PC-9 (cell line): ENCODE measurements at regions of chr9 and their contacts with region 1.

Region 1: GRCh38 chr9:97411789-97412625 is at the start of gene TDRD7:
- DNase-seq: peak; percentile 56 to 88
- H3K4me3 ChIP-seq: peak within 1 kb of the TSS; percentile 89
- H3K27ac ChIP-seq: no peak within 1 kb of the TSS
- H3K4me1 ChIP-seq: peaks cover 8% of the 10 kb centered on the region
- H3K27me3 ChIP-seq: peaks cover 10% of the 10 kb centered on the region; the same call in 1 of the 2 replicates
- CTCF ChIP-seq: peak; percentile 80
- total RNA-seq, gene TDRD7: 11.9 and 14.2 TPM in 2 replicates

Region 2: DNA sequence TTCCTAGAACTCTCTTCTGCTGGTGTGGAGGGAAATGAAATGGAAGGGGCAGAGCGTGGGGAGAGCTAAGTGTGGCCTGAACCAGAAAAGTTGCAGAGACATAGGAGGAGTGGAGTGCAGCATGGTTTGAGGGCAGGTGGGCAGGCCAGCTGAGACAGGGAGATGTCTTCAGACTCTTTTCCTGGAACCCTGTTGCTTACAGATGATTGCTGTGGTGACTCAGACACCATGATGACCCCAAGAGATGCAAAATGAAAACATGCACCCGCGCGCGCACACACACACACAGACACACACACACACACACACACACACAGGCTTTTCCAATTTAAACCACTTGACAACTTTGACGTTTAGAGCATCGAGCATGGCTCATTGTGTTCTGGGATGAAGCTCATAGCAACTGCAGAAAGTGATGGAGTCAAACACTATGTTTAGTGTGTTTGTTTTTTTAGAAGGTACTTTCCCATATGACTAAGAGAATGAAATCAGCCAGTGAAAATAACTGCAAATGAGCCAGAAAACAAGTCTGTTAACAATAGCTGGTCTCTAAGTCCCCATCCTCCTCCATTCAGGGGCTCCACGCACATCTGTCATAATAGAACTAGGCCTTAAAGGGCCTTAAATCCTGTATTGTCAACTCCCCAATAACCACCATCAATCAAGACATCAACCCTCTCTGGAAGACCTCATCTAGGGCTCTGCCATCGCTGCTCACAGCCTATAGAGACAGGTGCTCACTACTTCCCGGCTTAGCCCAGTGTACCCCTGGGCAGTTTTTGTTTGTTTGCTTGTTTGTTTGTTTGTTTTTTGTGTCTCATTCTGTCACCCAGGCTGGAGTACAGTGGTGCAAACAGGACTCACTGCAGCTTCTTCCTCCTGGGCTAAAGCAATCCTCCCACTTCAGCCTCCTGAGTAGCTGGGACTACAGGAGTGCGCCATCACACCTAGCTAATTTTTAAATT is 99.1 kb after region 1 on chr9:
- CTCF ChIA-PET with region 1: no interaction called
- POLR2A ChIA-PET with region 1: no interaction called
- intact Hi-C with region 1: no loop called
- DNase-seq: peak in 1 of 2 experiments; percentile 68
- H3K4me3 ChIP-seq: no peak overlapping the region
- H3K27ac ChIP-seq: peak overlapping the region; percentile 73
- H3K4me1 ChIP-seq: peaks cover 18% of the 10 kb centered on the region
- H3K27me3 ChIP-seq: no peaks in the 10 kb centered on the region
- CTCF ChIP-seq: no peak

Region 3: DNA sequence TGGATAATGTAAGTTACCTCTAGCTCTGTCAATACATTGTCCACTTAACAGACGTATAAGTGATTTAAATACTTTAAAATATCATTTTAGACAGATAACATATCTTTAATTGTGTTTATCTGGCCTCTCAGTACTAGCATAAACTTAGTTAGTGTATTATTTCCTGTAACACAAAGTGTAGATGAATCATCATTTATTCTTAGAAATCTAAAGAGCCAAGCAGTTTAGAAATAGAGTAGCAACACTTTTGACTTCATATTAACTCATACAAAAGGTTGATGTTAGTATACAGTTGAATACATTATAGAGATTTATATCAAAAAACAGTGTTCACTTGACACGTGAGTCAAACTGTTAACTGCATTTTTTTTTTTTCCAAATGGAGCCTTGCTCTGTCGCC is 239.6 kb after region 1 on chr9:
- CTCF ChIA-PET with region 1: no interaction called
- POLR2A ChIA-PET with region 1: interaction called, 10 read pairs
- intact Hi-C with region 1: no loop called
- DNase-seq: no peak
- H3K4me3 ChIP-seq: no peak overlapping the region
- H3K27ac ChIP-seq: no peak overlapping the region
- H3K4me1 ChIP-seq: no peaks in the 10 kb centered on the region
- H3K27me3 ChIP-seq: no peaks in the 10 kb centered on the region
- CTCF ChIP-seq: no peak